Breast epithelium (tissue), 4 donors: ENCODE measurements at regions of chr5 and their contacts with region 1.

Region 1: DNA sequence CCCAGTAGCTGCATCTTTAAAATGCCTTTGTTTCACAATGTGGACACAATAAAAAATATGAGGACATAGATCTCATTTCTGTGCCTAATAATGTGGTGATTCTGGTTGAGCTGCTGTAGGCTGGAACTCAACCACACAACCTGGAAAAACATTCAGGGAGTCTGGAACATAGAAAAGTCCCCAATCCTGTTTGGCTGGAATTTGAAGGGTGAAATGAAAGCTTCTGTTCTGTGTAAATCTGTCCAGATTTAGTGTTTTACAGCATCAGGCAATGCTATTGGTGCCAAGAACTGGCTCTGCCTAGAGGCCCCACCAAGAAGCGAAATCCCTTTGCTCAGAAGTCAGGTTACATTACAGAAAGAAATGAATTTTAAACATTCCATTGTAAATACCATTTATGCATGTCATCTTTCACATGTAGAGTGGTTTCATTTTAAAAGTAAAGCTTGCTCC is 56.2 kb downstream of the TMEM174 start:
- DNase-seq: no peak
- H3K4me3 ChIP-seq: no peak overlapping the region
- H3K27ac ChIP-seq: no peak overlapping the region
- H3K4me1 ChIP-seq: peaks cover 3 to 4% of the 10 kb centered on the region in 2 donors
- H3K27me3 ChIP-seq: peaks cover 2 to 63% of the 10 kb centered on the region in 2 donors
- CTCF ChIP-seq: no peak
- POLR2A ChIP-seq: no peak

Region 2: GRCh38 chr5:72005671-72006070 is 1223.6 kb before region 1 on chr5:
- intact Hi-C with region 1: no loop called
- DNase-seq: no peak
- H3K4me3 ChIP-seq: no peak overlapping the region
- H3K27ac ChIP-seq: no peak overlapping the region
- H3K4me1 ChIP-seq: no peaks in the 10 kb centered on the region
- H3K27me3 ChIP-seq: no peaks in the 10 kb centered on the region
- CTCF ChIP-seq: no peak
- POLR2A ChIP-seq: no peak

Region 3: DNA sequence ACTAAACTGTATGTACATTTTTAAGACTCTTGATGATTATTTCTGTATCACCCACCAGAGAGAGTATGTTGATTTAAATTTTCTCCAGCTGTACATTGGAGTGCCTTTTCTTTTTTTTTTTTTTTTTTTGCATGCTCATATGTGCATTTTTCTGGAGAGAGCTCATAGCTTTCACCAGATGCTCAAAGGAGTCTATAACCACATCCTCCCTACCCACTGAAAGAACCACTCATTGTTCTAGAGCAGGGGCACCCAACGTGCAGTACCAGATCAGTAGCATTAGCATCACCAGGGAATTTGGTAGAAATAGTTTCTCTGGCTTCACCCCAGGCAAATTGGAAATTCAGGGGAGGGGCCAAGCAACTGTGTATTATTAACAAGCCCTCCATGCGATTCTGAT is 162.8 kb before region 1 on chr5:
- intact Hi-C with region 1: no loop called
- DNase-seq: no peak
- H3K4me3 ChIP-seq: no peak overlapping the region
- H3K27ac ChIP-seq: no peak overlapping the region
- H3K4me1 ChIP-seq: no peaks in the 10 kb centered on the region
- H3K27me3 ChIP-seq: no peaks in the 10 kb centered on the region
- CTCF ChIP-seq: no peak
- POLR2A ChIP-seq: no peak

Region 4: GRCh38 chr5:73262991-73263710 is 33.9 kb after region 1 on chr5:
- intact Hi-C with region 1: no loop called
- DNase-seq: no peak
- H3K4me3 ChIP-seq: no peak overlapping the region
- H3K27ac ChIP-seq: no peak overlapping the region
- H3K4me1 ChIP-seq: no peaks in the 10 kb centered on the region
- H3K27me3 ChIP-seq: no peaks in the 10 kb centered on the region
- CTCF ChIP-seq: no peak
- POLR2A ChIP-seq: no peak

Region 5: DNA sequence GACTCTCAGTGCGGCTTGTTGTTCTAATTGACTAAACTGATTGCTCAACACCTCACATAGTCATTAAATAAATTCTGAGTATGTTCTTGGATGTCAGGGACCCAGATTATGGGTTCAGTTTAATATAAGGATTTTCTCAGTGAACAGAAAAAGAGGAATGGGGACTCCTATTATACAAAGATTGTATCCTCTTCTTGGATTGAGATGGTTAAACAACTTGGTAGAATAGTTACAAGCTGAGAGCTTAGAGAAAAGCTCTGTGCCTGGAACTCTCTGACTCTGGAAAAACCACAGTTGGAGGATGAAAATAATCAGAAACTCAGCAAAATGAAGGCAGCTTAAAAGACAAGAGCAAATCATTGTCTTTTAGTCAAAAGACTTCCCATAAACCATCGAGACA is 305.7 kb after region 1 on chr5:
- intact Hi-C with region 1: loop called (anchors 5 kb)
- DNase-seq: no peak
- H3K4me3 ChIP-seq: no peak overlapping the region
- H3K27ac ChIP-seq: no peak overlapping the region
- H3K4me1 ChIP-seq: no peaks in the 10 kb centered on the region
- H3K27me3 ChIP-seq: no peaks in the 10 kb centered on the region
- CTCF ChIP-seq: no peak
- POLR2A ChIP-seq: no peak

Region 6: DNA sequence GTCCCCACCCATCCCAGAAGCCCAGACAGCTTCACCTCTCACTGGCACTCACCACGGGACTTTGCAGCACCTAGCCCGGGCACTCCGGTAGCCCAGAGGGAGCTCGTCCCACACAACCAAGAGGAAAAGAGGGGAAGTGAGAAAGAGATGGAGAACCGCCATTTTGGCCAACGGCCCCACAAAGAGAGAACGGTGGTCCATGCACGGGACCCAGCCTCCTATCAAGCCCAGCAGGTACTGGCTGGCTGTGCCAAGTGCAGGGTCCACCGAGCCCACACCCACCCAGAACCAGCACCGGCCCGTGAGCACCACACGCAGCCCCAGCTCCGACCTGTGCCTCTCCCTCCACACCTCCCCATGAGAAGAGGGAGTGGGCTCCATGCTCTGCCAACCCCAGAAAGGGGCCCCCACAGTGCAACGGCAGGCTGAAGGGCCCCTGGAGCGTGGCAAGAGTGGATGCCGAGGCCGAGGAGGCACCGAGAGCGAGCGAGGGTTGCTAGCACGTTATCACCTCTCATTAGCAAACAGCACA is 1901.6 kb after region 1 on chr5:
- intact Hi-C with region 1: no loop called
- DNase-seq: no peak
- H3K4me3 ChIP-seq: no peak overlapping the region
- H3K27ac ChIP-seq: no peak overlapping the region
- H3K4me1 ChIP-seq: no peaks in the 10 kb centered on the region
- H3K27me3 ChIP-seq: no peaks in the 10 kb centered on the region
- CTCF ChIP-seq: no peak
- POLR2A ChIP-seq: no peak